ENCODE measurements at regions of chr9 and their contacts with region 1.

Region 1: GRCh38 chr9:84697509-84698114 is 28.1 kb downstream of the NTRK2 start:
- DNase-seq: peak; percentile 84
- H3K4me3 Mint-ChIP-seq: no peak overlapping the region
- H3K27ac Mint-ChIP-seq: no peak overlapping the region
- H3K4me1 Mint-ChIP-seq: peaks cover 15% of the 10 kb centered on the region
- H3K27me3 Mint-ChIP-seq: peaks cover 5% of the 10 kb centered on the region

Region 2: DNA sequence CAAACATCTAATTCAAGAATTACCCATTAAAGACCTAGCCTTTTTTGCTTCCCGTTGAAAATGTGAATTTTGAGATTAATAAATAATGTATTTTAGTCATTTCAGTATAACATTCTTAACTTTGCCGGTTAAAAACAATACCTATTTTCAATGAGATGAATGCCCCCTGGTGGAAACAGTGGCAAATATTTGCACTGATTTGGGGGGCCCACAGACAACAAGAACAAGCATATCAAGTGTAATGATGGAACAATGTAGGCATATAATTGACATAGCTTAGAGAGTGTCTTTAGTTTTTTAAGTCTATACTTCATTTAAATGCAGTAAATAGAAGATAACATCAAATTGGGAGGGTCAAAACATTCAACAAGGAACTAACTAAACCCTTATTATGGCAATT is 83.8 kb after region 1 on chr9:
- intact Hi-C with region 1: loop called (anchors 1 kb)
- DNase-seq: peak; percentile 70
- H3K4me3 Mint-ChIP-seq: no peak overlapping the region
- H3K27ac Mint-ChIP-seq: no peak overlapping the region
- H3K4me1 Mint-ChIP-seq: peaks cover 3% of the 10 kb centered on the region
- H3K27me3 Mint-ChIP-seq: peaks cover 16% of the 10 kb centered on the region

Region 3: GRCh38 chr9:84793251-84793650 is 95.6 kb after region 1 on chr9:
- intact Hi-C with region 1: no loop called
- DNase-seq: no peak
- H3K4me3 Mint-ChIP-seq: no peak overlapping the region
- H3K27ac Mint-ChIP-seq: no peak overlapping the region
- H3K4me1 Mint-ChIP-seq: no peaks in the 10 kb centered on the region
- H3K27me3 Mint-ChIP-seq: peaks cover 11% of the 10 kb centered on the region

Region 4: GRCh38 chr9:84953797-84954705 is 256.4 kb after region 1 on chr9:
- intact Hi-C with region 1: loop called (anchors 5 kb)
- DNase-seq: peak; percentile 88
- H3K4me3 Mint-ChIP-seq: no peak overlapping the region
- H3K27ac Mint-ChIP-seq: no peak overlapping the region
- H3K4me1 Mint-ChIP-seq: peaks cover 4% of the 10 kb centered on the region
- H3K27me3 Mint-ChIP-seq: peaks cover 2% of the 10 kb centered on the region